ENCODE measurements at regions of chr21 and their contacts with region 1.

Region 1: DNA sequence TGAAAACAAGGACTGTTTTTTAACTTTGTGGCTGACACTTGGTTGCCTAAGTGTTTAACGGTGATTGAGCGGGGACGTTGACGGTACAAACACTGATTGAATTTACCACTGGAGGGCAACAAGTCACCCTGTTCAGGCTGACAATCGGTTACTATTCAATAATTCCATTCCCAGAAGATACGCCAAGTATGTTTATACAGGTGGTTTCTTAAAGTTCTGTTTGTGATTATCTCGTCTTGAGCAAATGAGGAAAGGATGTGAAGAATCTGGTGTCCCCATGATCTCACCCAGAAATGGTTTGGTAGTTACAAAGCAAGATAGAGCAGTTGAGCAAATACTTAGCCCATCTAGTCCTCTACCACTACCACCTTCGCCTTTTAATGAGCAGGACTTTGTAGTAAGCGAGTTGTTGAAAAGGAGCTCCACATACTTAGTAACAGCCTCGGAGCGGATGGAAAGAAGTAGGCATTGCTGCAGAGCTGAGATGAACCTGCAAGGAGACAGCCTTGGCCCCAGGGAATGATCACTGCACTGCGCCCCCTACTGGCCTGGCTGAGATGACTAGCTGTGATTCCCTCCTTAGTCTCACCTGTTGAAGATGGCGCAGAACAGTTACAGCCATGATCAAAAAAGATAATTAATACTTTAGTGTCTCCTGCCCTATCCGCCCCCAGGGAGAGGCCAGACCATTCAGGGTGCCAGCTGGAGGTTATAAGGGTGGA is 36.3 kb downstream of the IFNAR1 start:
- DNase-seq: peak; percentile 77
- H3K4me3 ChIP-seq: no peak overlapping the region
- H3K27ac ChIP-seq: no peak overlapping the region
- H3K4me1 ChIP-seq: peaks cover 16% of the 10 kb centered on the region
- H3K27me3 ChIP-seq: no peaks in the 10 kb centered on the region
- CTCF ChIP-seq: peak; percentile 82 to 91
- POLR2A ChIP-seq: no peak

Region 2: DNA sequence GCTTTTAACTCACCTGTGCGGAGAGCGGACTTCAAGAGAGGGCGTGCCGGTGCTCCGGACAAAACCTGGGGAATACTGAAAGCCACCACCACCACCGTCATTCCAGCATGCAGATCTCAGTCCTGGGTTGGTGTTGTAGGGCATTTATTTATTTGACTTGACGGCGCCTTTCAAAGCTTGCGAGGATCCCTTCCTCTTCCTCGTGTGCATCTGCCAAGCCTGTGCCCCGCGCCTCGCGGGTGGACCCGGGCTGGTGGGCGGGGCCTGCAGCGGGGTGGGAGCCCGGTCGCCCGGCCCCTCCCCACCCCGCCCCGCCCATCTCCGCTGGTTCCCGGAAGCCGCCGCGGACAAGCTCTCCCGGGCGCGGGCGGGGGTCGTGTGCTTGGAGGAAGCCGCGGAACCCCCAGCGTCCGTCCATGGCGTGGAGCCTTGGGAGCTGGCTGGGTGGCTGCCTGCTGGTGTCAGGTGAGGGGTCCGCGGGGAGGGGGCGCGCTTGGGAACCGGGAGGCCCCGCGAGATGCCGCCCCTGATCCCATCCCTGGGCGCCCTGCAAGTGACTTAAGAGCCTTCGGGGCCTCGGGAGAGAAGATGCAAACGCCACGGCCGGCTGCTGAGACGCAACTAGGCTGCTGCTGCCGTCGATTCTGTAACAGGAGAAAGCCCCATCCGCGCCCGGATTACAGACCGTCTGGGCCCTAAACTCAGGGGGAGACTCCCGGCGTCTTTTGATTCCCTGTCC is 94.8 kb before region 1 on chr21 and contains the start of gene IL10RB:
- CTCF ChIA-PET with region 1: interaction called, 21 read pairs
- POLR2A ChIA-PET with region 1: no interaction called
- dilution Hi-C with region 1: no loop called
- intact Hi-C with region 1: no loop called
- DNase-seq: peak; percentile 72
- H3K4me3 ChIP-seq: peak within 1 kb of the TSS; percentile 77 to 88 (median 84)
- H3K27ac ChIP-seq: peak within 1 kb of the TSS; percentile 54
- H3K4me1 ChIP-seq: peaks cover 10% of the 10 kb centered on the region
- H3K27me3 ChIP-seq: no peaks in the 10 kb centered on the region
- CTCF ChIP-seq: no peak
- POLR2A ChIP-seq: no peak
- total RNA-seq, gene IL10RB: 21.7 and 21.9 TPM in 2 replicates

Region 3: GRCh38 chr21:33339918-33340317 is 21.1 kb before region 1 on chr21:
- CTCF ChIA-PET with region 1: interaction called, 15 read pairs
- POLR2A ChIA-PET with region 1: no interaction called
- dilution Hi-C with region 1: no loop called
- intact Hi-C with region 1: no loop called
- DNase-seq: no peak
- H3K4me3 ChIP-seq: no peak overlapping the region
- H3K27ac ChIP-seq: no peak overlapping the region
- H3K4me1 ChIP-seq: no peaks in the 10 kb centered on the region
- H3K27me3 ChIP-seq: no peaks in the 10 kb centered on the region
- CTCF ChIP-seq: no peak
- POLR2A ChIP-seq: no peak

Region 4: GRCh38 chr21:33380483-33380998 is 19.5 kb after region 1 on chr21:
- CTCF ChIA-PET with region 1: interaction called, 24 read pairs
- POLR2A ChIA-PET with region 1: no interaction called
- dilution Hi-C with region 1: no loop called
- intact Hi-C with region 1: no loop called
- DNase-seq: peak; percentile 93
- H3K4me3 ChIP-seq: no peak overlapping the region
- H3K27ac ChIP-seq: peak overlapping the region; percentile 93
- H3K4me1 ChIP-seq: peaks cover 34% of the 10 kb centered on the region
- H3K27me3 ChIP-seq: no peaks in the 10 kb centered on the region
- CTCF ChIP-seq: no peak
- POLR2A ChIP-seq: peak; percentile 56

Region 5: DNA sequence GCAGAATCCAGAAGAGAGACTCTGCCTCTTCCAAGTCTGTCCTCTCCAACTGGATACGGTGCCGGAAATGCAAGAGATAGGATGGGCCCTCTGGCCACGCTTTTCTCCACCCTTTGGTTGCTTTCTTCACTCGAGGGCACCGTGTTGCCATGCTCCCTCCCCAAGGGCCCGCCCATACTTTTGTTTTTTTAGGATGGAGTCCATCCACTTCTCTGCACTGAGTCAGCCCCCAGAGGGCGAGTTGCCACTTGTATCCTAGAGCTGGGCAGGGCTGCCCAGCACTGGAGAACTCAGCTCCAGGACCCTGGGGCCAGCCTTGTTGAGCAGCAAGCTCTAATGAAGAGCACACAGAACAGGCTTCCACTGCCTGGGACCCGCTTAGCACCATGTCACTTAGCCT is 67.6 kb after region 1 on chr21:
- CTCF ChIA-PET with region 1: interaction called, 18 read pairs
- POLR2A ChIA-PET with region 1: no interaction called
- dilution Hi-C with region 1: no loop called
- intact Hi-C with region 1: no loop called
- DNase-seq: peak; percentile 23
- H3K4me3 ChIP-seq: no peak overlapping the region
- H3K27ac ChIP-seq: no peak overlapping the region
- H3K4me1 ChIP-seq: peaks cover 12% of the 10 kb centered on the region
- H3K27me3 ChIP-seq: no peaks in the 10 kb centered on the region
- CTCF ChIP-seq: no peak
- POLR2A ChIP-seq: no peak

Region 6: DNA sequence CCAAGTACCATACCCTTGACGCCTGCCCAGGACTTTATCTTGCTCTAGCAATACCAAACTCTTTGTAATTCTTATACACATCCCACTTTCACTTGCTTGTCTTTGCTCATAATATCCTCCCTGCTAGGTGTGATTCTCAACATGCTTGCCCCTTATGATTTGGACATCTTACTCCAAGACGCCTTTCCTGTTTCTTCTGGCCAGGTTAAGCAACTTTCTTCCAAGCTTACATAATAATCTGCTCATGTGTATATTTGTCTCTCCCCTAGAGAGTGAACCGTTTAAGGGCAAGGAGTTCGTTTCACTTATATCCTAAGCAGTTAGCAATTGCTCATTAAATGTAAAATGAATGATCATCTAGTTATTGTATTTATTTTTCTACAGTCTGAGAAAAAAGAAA is 258.7 kb after region 1 on chr21:
- CTCF ChIA-PET with region 1: no interaction called
- POLR2A ChIA-PET with region 1: no interaction called
- dilution Hi-C with region 1: no loop called
- intact Hi-C with region 1: no loop called
- DNase-seq: no peak
- H3K4me3 ChIP-seq: no peak overlapping the region
- H3K27ac ChIP-seq: no peak overlapping the region
- H3K4me1 ChIP-seq: no peaks in the 10 kb centered on the region
- H3K27me3 ChIP-seq: no peaks in the 10 kb centered on the region
- CTCF ChIP-seq: no peak
- POLR2A ChIP-seq: no peak

Region 7: DNA sequence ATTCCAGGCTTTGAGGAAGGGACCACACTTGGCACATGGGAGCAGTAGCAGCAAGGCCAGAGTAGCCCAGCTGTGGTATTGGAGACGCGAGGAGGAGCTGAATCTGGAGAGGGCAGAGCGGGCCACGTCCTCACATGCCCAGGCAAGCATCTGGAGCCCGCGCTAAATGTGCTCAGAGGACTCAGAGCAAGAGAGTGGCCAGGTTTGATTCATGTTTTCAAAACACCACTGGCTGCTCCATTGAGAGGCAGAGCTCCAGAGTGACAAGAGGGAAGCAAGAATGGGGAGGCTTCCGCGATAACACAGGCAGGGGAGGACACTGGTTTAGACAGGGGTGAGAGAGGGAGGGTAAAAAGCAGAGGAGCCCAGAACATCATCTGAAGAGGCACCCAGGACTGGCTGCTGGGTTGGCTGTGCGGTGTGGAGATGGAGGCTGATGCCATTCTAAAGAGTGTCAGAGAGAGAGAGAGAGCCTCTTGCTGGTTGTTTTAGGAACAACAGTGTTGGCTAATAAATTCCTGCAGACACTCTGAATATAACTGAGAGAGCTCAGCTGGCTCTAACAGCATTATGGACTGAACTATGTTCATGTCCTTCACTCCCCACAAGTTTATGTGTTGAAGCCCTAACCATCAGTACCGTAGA is 1221.6 kb after region 1 on chr21:
- CTCF ChIA-PET with region 1: no interaction called
- POLR2A ChIA-PET with region 1: no interaction called
- dilution Hi-C with region 1: no loop called
- intact Hi-C with region 1: no loop called
- DNase-seq: peak; percentile 49
- H3K4me3 ChIP-seq: no peak overlapping the region
- H3K27ac ChIP-seq: no peak overlapping the region
- H3K4me1 ChIP-seq: no peaks in the 10 kb centered on the region
- H3K27me3 ChIP-seq: no peaks in the 10 kb centered on the region
- CTCF ChIP-seq: peak; percentile 30 to 56
- POLR2A ChIP-seq: no peak